AG04449 (cell line): ENCODE measurements at regions of chr4 and their contacts with region 1.

Region 1: GRCh38 chr4:1809754-1810511 is 16.8 kb downstream of the FGFR3 start:
- DNase-seq: no peak
- H3K4me3 ChIP-seq: no peak overlapping the region
- CTCF ChIP-seq: peak; percentile 97

Region 2: DNA sequence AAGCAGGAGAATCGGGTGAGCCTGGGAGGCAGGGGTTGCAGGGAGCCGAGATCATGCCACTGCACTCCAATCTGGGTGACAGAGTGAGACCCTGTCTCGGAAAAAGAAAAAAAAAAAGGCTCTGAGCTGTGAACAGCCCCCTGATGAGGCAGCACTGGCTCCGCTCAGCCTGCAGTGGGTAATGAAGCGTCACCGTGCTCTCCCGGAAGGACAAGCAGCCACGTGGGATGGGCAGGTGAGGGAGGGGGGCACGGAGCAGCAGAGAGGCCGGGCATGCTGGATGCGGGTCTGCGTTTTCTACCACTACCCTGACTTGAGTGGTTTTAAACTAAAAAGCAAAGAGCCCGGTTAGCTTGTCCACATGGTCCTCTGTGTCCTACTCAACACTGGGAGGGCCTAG is 73.1 kb before region 1 on chr4:
- CTCF ChIA-PET with region 1: interaction called, 26 read pairs
- POLR2A ChIA-PET with region 1: no interaction called
- DNase-seq: no peak
- H3K4me3 ChIP-seq: no peak overlapping the region
- CTCF ChIP-seq: no peak

Region 3: DNA sequence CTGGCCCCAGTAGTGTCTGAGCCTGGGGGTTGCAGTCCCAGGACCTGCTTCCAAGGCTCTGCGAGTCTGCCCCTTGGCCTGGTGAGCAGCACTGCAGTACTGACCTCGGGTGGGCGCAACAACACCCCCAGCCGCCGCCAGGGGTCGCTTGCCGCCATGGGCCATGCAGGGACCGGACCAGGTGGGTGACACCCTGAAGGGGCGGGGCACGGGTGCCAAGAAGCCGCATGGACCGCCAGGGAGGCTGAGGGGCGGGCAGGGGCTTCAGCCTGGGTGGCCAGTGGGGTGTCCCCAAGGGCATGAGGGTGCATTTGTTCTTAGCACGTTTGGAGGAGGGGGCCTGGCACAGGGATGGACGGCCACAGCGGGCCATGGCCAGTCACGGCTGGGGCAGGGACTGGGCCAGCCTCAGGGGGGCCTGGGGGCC is 63.7 kb before region 1 on chr4:
- CTCF ChIA-PET with region 1: interaction called, 205 read pairs
- POLR2A ChIA-PET with region 1: no interaction called
- DNase-seq: no peak
- H3K4me3 ChIP-seq: no peak overlapping the region
- CTCF ChIP-seq: peak; percentile 98

Region 4: GRCh38 chr4:1752284-1753041 is 57.5 kb before region 1 on chr4:
- CTCF ChIA-PET with region 1: interaction called, 205 read pairs
- POLR2A ChIA-PET with region 1: no interaction called
- DNase-seq: no peak
- H3K4me3 ChIP-seq: no peak overlapping the region
- CTCF ChIP-seq: no peak

Region 5: GRCh38 chr4:1792832-1793495 is 17.0 kb before region 1 on chr4 and contains the start of gene FGFR3:
- CTCF ChIA-PET with region 1: interaction called, 107 read pairs
- POLR2A ChIA-PET with region 1: no interaction called
- DNase-seq: no peak
- H3K4me3 ChIP-seq: peak within 1 kb of the TSS; percentile 45
- CTCF ChIP-seq: no peak

Region 6: DNA sequence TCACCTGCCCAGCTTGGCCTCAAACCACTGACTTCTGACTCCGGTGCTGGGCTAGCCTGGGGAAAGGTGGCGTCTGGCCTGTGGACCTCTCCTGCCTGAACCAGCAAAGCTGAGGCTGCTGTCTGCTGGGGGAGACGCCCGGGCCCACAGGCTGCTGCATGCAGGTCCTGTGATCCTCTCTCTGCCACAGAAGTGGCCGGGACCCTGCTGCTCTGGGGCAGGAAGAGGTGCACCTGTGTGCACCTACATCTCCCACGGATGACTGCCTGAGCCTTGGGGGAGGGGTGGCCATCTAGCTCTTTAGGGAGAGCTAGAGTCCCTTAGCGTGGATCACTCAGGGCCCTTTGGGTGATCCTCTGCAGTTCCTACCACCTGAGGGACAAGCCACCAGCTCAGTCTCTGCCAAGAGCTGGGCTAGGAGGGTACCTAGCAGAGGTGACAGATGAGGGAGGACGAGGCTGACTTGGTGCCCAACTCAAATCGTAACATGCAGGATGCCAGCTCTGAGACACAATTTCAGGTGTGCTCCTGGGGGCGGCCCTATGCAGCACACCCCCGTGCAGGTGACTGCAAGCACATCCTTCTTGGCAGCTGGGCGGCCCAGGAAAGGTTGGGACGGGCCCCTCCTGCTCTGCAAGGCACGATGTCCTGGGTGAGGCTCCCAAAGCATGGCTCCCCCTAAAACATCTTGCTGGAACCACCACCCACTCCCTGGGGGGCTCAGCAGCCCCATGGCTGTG is 23.5 kb after region 1 on chr4:
- CTCF ChIA-PET with region 1: interaction called, 21 read pairs
- POLR2A ChIA-PET with region 1: no interaction called
- DNase-seq: no peak
- H3K4me3 ChIP-seq: no peak overlapping the region
- CTCF ChIP-seq: no peak

Region 7: GRCh38 chr4:1910643-1911042 is 100.7 kb after region 1 on chr4:
- CTCF ChIA-PET with region 1: interaction called, 19 read pairs
- POLR2A ChIA-PET with region 1: no interaction called
- DNase-seq: peak; percentile 12
- H3K4me3 ChIP-seq: no peak overlapping the region
- CTCF ChIP-seq: peak; percentile 69

Region 8: GRCh38 chr4:2008875-2009703 is 199.2 kb after region 1 on chr4 and contains the start of gene NELFA:
- CTCF ChIA-PET with region 1: no interaction called
- POLR2A ChIA-PET with region 1: no interaction called
- DNase-seq: peak; percentile 29
- H3K4me3 ChIP-seq: peak within 1 kb of the TSS; percentile 100
- CTCF ChIP-seq: peak; percentile 23